WTC11 (cell line): ENCODE measurements at regions of chr1 and their contacts with region 1.

Region 1: GRCh38 chr1:19582302-19582701 is 61.8 kb upstream of the NBL1 start:
- DNase-seq: peak; percentile 91
- ATAC-seq: peak; percentile 99
- H3K4me3 Mint-ChIP-seq: no peak overlapping the region
- H3K27ac Mint-ChIP-seq: no peak overlapping the region
- H3K4me1 Mint-ChIP-seq: no peaks in the 10 kb centered on the region
- H3K27me3 Mint-ChIP-seq: no peaks in the 10 kb centered on the region; the same call in 1 of the 2 replicates
- CTCF ChIP-seq: peak; percentile 78

Region 2: DNA sequence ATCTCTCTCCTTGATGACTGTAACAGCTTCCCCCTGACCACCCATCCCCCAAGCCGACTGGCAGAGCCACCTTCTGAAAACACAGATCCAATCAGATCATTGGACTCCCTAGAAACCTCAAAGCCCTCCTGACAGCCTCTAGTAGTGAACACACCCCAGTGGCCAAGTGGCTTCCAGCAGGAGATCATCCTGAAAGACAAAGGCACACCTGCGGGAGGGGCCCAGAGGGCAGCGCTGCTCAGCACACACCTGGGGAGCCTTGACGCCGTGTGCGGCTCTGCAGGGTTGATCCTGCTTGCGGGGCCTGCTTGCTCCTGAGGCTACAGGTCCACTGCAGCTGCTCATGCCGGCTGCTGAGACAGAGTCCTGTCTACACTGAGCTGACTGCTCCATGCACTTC is 228.7 kb before region 1 on chr1:
- CTCF ChIA-PET with region 1: interaction called, 15 read pairs
- POLR2A ChIA-PET with region 1: no interaction called
- DNase-seq: peak; percentile 79
- ATAC-seq: peak; percentile 94
- H3K4me3 Mint-ChIP-seq: peak overlapping the region; percentile 26; the same call in 1 of the 2 replicates
- H3K27ac Mint-ChIP-seq: peak overlapping the region; percentile 61
- H3K4me1 Mint-ChIP-seq: peaks cover 31% of the 10 kb centered on the region
- H3K27me3 Mint-ChIP-seq: no peaks in the 10 kb centered on the region
- CTCF ChIP-seq: no peak

Region 3: GRCh38 chr1:19405761-19406487 is 176.4 kb before region 1 on chr1:
- CTCF ChIA-PET with region 1: interaction called, 23 read pairs
- POLR2A ChIA-PET with region 1: no interaction called
- DNase-seq: no peak
- ATAC-seq: no peak
- H3K4me3 Mint-ChIP-seq: no peak overlapping the region
- H3K27ac Mint-ChIP-seq: peak overlapping the region; percentile 48
- H3K4me1 Mint-ChIP-seq: peaks cover 70% of the 10 kb centered on the region
- H3K27me3 Mint-ChIP-seq: no peaks in the 10 kb centered on the region
- CTCF ChIP-seq: no peak

Region 4: DNA sequence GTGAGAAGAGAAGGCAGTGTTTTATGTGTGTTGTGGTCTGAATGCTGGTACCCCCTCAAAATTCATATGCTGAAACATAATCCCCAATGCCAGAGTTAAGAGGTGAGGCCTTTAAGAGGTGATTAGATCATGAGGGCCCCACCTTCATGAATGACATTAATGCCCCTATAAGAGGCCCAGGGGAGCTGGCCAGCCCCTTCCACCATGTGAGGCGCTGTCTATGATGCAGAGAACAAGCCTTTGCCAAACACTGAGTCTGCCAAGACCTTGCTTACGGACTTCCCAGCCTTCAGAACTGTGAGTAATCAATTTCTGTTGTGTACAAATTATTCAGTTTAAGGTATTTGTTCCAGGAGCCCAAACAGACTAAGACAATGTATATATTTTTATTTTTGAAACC is 117.2 kb before region 1 on chr1:
- CTCF ChIA-PET with region 1: interaction called, 13 read pairs
- POLR2A ChIA-PET with region 1: no interaction called
- DNase-seq: no peak
- ATAC-seq: no peak
- H3K4me3 Mint-ChIP-seq: no peak overlapping the region
- H3K27ac Mint-ChIP-seq: no peak overlapping the region
- H3K4me1 Mint-ChIP-seq: peaks cover 80% of the 10 kb centered on the region
- H3K27me3 Mint-ChIP-seq: no peaks in the 10 kb centered on the region
- CTCF ChIP-seq: no peak

Region 5: DNA sequence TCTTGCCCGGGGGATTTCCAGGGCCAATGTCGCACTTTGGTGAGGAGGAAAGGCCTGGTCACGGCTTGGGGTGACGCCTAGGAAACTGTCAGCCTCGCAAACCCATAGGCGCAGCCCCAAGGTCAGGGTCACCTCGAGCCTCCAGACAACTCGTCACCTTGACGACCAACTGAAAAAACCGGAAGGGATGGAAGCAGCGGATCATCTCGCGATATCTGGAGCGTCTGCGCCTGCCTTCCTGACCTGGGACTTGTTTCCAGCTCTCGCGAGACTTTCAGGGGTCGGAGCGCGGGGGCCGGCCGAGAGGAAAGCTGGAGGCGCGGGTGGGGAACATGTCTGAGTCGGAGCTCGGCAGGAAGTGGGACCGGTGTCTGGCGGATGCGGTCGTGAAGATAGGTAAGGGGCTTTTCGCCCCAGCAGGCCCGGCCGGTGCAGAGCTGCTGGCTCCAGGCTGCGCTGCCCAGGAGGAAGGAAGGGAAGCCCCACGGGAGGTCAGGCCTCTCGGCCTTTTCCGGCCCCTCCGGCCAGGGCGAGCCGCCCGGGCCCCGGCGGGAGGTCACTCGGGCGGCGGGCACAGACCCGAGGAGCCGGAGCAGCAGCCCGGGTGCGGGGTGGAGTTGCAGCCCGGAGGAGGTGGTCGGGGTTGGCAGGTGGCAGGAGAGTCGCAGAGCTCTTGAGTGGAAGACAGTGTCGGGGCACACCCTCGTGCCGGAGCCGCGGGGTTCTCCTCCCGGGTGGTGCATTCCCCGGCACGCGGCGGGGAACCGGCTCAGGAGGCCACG is 14.6 kb after region 1 on chr1:
- CTCF ChIA-PET with region 1: interaction called, 20 read pairs
- POLR2A ChIA-PET with region 1: interaction called, 4 read pairs
- DNase-seq: peak; percentile 96
- ATAC-seq: peak; percentile 95
- H3K4me3 Mint-ChIP-seq: peak overlapping the region; percentile 99
- H3K27ac Mint-ChIP-seq: peak overlapping the region; percentile 99
- H3K4me1 Mint-ChIP-seq: peaks cover 19% of the 10 kb centered on the region
- H3K27me3 Mint-ChIP-seq: no peaks in the 10 kb centered on the region
- CTCF ChIP-seq: no peak

Region 6: DNA sequence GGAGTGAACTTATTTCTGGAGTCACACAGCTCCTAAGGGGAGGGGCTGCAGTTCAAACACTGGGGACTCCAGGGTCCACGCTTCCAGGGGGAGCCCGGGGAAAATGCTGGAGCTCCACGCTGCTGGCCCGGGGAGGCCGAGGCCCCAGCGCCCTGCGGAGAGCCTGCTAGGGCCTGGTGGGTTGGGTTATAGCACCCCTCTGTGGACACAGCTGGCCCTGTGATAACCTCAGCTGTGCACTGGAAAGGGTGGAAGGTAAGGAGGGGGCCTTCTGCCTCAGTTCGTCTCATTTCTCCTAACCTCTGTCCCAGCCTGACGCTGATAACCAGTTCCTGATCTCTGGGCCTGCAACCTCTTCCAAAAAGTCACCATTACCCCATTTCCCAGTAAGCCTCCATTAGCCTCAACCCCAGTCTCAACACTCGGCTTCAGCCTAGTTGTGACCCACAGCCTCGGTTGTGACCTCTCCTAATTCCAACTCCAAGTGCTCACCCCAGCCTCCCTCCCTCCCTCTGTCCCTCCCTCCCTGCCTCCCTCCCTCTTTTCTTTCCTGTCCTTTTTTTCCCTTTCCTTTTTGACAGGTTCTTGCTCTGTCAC is 68.9 kb after region 1 on chr1:
- CTCF ChIA-PET with region 1: interaction called, 23 read pairs
- POLR2A ChIA-PET with region 1: no interaction called
- DNase-seq: peak; percentile 68
- ATAC-seq: peak; percentile 34
- H3K4me3 Mint-ChIP-seq: no peak overlapping the region
- H3K27ac Mint-ChIP-seq: no peak overlapping the region
- H3K4me1 Mint-ChIP-seq: peaks cover 13% of the 10 kb centered on the region
- H3K27me3 Mint-ChIP-seq: peaks cover 7% of the 10 kb centered on the region
- CTCF ChIP-seq: 0 out of 2 replicates have a peak, but pooled peaks have one; percentile 16

Region 7: DNA sequence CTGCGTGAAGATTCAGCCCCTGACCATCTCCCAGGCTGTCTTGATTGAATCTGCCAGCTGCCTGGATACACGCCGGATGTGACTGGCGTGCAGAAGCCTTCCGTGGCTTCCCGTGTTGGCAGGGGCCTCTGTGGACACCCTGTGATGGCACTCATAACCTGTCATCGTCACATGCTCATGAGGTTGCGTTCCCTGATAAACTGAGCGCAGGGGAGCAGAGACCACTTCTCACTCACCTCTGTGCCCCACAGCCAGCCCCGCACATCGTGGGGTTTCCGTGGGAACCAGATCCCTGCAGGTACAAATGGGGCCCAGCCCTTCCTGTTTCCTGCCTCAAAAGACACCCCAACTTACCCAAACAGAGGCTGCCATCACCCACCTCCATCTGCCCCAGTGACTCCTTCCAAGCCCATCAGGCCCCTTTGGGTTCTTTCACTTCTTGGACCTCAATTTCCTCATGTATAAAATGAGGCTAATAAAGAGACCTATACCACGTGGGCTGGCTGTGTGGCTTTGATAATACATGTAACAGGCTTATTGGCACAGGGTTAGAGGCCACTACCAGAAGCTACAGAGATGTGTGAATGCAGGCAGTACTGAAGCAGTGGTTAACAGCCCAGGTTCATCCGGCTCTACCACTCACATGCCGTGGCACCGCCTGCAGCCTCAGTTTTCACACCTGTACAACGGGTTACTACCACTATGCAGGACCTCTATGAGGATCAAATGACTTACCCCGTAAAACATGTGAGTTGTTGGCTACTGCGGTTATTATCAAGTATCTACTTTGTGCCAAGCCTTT is 105.9 kb after region 1 on chr1:
- CTCF ChIA-PET with region 1: no interaction called
- POLR2A ChIA-PET with region 1: no interaction called
- DNase-seq: no peak
- ATAC-seq: no peak
- H3K4me3 Mint-ChIP-seq: no peak overlapping the region
- H3K27ac Mint-ChIP-seq: no peak overlapping the region
- H3K4me1 Mint-ChIP-seq: peaks cover 23% of the 10 kb centered on the region
- H3K27me3 Mint-ChIP-seq: no peaks in the 10 kb centered on the region
- CTCF ChIP-seq: no peak